Mammary epithelial cell (primary cell): ENCODE measurements at regions of chr4 and their contacts with region 1.

Region 1: GRCh38 chr4:118352843-118353533 is at the start of gene PRSS12:
- DNase-seq: peak; percentile 82
- H3K4me3 ChIP-seq: peak within 1 kb of the TSS; percentile 73 to 87 (median 76)
- H3K27ac ChIP-seq: peak within 1 kb of the TSS; percentile 41
- H3K4me1 ChIP-seq: peaks cover 11% of the 10 kb centered on the region
- H3K27me3 ChIP-seq: no peaks in the 10 kb centered on the region
- CTCF ChIP-seq: peak; percentile 59 to 85
- total RNA-seq, gene PRSS12: 33.0 to 70.8 TPM

Region 2: GRCh38 chr4:118289794-118290193 is 63.2 kb before region 1 on chr4:
- CTCF ChIA-PET with region 1: no interaction called
- dilution Hi-C with region 1: no loop called
- in situ Hi-C with region 1: loop called (anchors 5 to 10 kb)
- intact Hi-C with region 1: no loop called
- DNase-seq: no peak
- H3K4me3 ChIP-seq: no peak overlapping the region
- H3K27ac ChIP-seq: no peak overlapping the region
- H3K4me1 ChIP-seq: peaks cover 29% of the 10 kb centered on the region
- H3K27me3 ChIP-seq: no peaks in the 10 kb centered on the region
- CTCF ChIP-seq: no peak

Region 3: GRCh38 chr4:118417325-118417724 is 64.3 kb after region 1 on chr4:
- CTCF ChIA-PET with region 1: interaction called, 5 read pairs
- dilution Hi-C with region 1: no loop called
- in situ Hi-C with region 1: no loop called
- intact Hi-C with region 1: loop called (anchors 5 kb)
- DNase-seq: peak; percentile 93
- H3K4me3 ChIP-seq: no peak overlapping the region
- H3K27ac ChIP-seq: peak overlapping the region; percentile 66
- H3K4me1 ChIP-seq: peaks cover 4% of the 10 kb centered on the region
- H3K27me3 ChIP-seq: no peaks in the 10 kb centered on the region
- CTCF ChIP-seq: no peak